ENCODE measurements at regions of chr18 and their contacts with region 1.

Region 1: DNA sequence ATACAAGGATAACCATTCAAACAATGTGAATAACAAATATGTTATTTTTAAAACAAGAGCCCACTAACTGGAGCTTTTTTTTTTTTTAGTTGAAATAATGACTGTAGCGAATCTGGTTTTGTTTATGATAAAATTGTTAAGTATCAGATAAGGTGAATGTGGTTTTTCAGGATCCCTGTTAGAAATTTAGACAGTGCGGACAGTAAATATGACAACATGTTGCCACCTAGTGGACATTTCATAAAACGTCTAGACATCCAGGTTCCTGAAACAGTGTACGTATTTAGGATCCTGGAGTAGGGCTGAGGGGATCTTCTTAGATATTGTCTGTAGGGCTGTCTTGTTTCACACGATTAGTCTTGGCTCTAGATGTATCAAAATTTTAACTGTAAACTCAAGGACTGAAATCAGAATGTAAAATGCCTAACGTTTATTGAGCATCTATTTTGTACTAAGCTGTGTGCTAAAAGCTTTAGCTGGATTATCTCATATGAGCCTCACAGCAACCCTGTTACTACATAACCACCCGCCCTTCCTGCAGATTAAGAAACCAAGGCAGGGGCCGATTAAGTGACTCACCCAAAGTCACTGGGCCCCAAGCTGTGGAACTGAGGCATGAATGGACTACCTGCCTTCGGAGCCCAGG is 23.9 kb upstream of the CCDC68 start:
- DNase-seq: no peak
- ATAC-seq: peak in 3 of 4 donors; percentile 42 to 67 (median 49)
- H3K4me3 ChIP-seq: no peak overlapping the region
- H3K27ac ChIP-seq: no peak overlapping the region
- H3K4me1 ChIP-seq: no peaks in the 10 kb centered on the region
- H3K27me3 ChIP-seq: no peaks in the 10 kb centered on the region
- CTCF ChIP-seq: peak; percentile 60 to 80 (median 72)
- POLR2A ChIP-seq: no peak

Region 2: DNA sequence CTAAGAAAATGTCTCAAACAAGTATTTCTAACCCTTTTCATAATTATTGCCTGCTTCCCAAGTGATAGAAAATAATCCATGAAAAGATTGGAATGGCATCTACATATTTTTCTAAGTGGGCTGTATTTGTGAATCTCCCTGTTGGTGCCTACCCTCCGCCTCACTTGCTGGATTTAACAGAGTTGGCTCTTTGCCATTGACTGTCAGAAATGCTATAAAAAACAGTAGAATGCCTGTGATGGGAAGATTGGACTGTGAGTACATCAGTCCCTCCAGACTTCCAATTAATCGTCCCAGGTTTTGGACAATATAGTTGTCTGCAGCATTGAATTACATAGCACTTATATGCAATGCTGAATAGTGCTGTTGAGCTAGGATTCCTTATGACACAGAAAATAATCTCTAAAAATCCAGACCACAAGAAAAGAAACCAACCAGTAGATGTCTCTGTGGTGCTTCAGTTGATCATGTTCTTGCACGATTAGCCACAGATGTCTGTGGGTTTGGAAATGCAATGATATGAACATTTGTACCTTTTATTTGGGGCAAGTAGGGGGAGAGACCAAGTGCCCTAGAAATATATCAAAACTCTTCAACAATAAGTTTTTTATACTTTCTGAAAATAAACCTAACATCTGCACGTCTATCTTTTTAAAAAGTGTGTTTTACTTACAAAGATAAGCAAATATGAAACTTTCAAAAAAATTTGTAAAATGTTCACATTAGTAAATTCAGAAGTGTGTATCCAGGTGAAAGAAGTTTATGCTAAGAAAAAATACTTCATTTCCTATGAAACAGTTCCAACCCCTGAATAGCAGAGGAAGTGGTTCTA is 303.6 kb before region 1 on chr18:
- intact Hi-C with region 1: loop called (anchors 2 to 5 kb)
- DNase-seq: no peak
- ATAC-seq: peak in 3 of 4 donors; percentile 44 to 60 (median 53)
- H3K4me3 ChIP-seq: no peak overlapping the region
- H3K27ac ChIP-seq: no peak overlapping the region
- H3K4me1 ChIP-seq: no peaks in the 10 kb centered on the region
- H3K27me3 ChIP-seq: no peaks in the 10 kb centered on the region
- CTCF ChIP-seq: peak; percentile 11 to 56 (median 38)
- POLR2A ChIP-seq: no peak